Activated CD4-positive, alpha-beta T cell treated with anti-CD3 and anti-CD28 coated beads for 36 hours (primary cell): ENCODE measurements at regions of chr14 and their contacts with region 1.

Region 1: GRCh38 chr14:102096214-102097114 is 9.6 kb upstream of the HSP90AA1 start:
- DNase-seq: peak; percentile 82
- ATAC-seq: peak; percentile 57
- H3K4me3 Mint-ChIP-seq: no peak overlapping the region
- H3K27ac Mint-ChIP-seq: peak overlapping the region; percentile 51
- H3K4me1 Mint-ChIP-seq: peaks cover 22% of the 10 kb centered on the region
- H3K27me3 Mint-ChIP-seq: no peaks in the 10 kb centered on the region

Region 2: DNA sequence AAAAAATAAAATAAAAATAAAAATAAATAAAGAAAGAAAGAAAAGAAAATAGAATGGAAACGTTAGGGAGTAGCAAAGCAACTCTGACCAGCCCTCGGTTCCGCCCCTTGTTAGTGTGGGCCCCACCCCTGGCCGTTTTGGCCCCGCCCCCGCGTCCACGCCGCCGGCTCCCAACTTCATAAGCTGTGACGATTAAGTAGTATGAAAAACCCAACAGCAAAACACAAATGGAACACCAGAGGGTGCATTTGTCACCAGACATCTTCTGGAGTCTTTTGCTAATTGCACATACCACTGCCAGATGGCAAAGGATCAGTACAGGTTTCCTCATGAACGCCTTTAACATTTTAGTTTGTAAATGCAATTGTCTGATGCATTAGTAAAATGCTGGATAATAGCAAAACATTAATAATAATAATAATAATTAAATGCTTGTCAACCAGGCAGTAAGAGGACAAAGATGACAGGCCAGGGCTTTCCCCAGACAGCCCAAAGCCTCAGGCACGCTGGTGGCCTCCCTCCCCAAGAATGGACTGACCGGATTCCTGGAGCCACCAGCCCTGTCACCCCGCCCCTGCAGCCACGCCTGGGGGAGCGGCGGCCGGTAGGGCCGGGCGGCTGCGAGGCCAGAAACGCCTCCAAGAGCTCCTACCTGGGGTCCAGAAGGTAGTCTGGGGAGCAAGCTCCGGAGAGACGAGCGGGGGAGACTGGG is 33.2 kb before region 1 on chr14:
- CTCF ChIA-PET with region 1: interaction called, 26 read pairs
- POLR2A ChIA-PET with region 1: no interaction called
- intact Hi-C with region 1: loop called (anchors 1 kb)
- DNase-seq: peak; percentile 80
- ATAC-seq: peak; percentile 85
- H3K4me3 Mint-ChIP-seq: no peak overlapping the region
- H3K27ac Mint-ChIP-seq: no peak overlapping the region
- H3K4me1 Mint-ChIP-seq: peaks cover 3% of the 10 kb centered on the region
- H3K27me3 Mint-ChIP-seq: no peaks in the 10 kb centered on the region

Region 3: GRCh38 chr14:102279688-102280348 is 183.4 kb after region 1 on chr14:
- CTCF ChIA-PET with region 1: no interaction called
- POLR2A ChIA-PET with region 1: no interaction called
- intact Hi-C with region 1: no loop called
- DNase-seq: peak; percentile 50
- ATAC-seq: peak; percentile 79
- H3K4me3 Mint-ChIP-seq: no peak overlapping the region
- H3K27ac Mint-ChIP-seq: no peak overlapping the region
- H3K4me1 Mint-ChIP-seq: no peaks in the 10 kb centered on the region
- H3K27me3 Mint-ChIP-seq: no peaks in the 10 kb centered on the region